Activated CD8-positive, alpha-beta memory T cell treated with anti-CD3 and anti-CD28 coated beads, Interleukin-2, amount 10 ng/mL, durations not matched to agents 7 days and 5 days (primary cell): ENCODE measurements at regions of chr10 and their contacts with region 1.

Region 1: DNA sequence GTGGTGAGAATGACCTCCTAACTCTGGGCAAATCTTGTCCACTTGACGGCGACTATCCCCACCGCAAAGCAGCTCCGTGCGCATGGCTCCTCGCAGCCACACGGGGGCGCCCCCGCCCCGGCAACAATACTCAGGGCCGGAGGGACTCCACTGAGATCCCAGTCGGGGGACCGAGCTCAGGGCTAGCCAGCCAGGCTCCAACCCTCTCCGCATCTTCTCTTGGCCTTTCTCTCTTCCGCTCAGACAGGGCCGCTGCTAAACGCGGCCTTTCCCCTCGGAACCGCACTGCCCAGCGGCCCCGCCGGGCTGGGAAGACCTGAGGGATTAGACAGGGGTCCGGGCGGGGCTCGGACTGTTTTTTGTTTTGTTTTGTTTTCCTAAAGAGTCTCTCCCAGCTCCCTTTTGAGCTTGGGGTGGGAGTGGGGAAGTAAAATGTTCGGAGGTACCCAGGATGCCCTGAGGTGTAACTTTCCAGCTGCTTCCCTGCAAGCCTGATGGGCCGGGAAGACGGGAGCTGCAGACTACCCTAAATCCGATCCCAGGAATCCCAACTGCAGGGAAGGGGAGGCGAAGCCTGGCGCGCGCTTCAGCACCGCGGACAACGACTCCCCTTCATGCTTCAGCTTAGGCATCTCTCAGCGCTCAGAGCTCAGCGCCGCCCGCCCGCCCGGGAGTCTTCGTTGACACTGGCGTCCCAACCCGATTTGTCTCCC is 2.7 kb downstream of the KCNIP2 start:
- DNase-seq: peak; percentile 86
- ATAC-seq: peak; percentile 77
- H3K4me3 Mint-ChIP-seq: peak overlapping the region; percentile 73
- H3K27ac Mint-ChIP-seq: peak overlapping the region; percentile 64
- H3K4me1 Mint-ChIP-seq: peaks cover 35% of the 10 kb centered on the region
- H3K27me3 Mint-ChIP-seq: peaks cover 12% of the 10 kb centered on the region

Region 2: DNA sequence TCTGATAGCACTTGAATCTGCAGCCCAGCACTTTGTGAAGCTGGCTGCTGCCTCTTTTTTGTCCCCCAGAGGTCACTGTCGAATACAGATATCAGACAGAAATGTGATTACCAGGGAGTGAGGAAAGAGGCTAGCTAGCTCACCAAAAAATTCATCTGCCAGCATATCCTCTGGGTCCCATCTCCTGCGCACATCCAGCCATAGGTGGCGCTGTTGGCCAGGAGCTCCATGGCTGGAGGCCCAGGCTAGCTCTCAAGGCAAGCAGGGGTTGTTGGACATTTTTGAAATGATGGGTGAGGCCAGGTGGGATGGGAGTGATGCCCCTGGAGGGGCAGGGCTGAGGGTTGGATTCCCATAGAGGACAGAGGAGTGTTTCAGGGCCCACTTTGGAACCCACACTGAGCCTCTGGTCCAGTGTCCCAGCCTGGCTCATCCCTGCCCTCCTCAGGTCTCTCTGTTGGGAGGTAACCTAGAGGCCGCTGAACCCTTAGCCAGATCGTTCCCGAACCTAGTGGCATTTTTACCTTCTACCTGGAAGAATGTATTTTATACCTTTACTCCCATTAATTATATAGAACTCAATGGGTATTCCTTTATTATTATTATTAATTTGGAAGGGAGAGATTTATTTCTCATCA is 238.0 kb before region 1 on chr10:
- CTCF ChIA-PET with region 1: interaction called, 11 read pairs
- DNase-seq: peak; percentile 83
- ATAC-seq: peak; percentile 98
- H3K4me3 Mint-ChIP-seq: no peak overlapping the region
- H3K27ac Mint-ChIP-seq: no peak overlapping the region
- H3K4me1 Mint-ChIP-seq: no peaks in the 10 kb centered on the region
- H3K27me3 Mint-ChIP-seq: no peaks in the 10 kb centered on the region

Region 3: DNA sequence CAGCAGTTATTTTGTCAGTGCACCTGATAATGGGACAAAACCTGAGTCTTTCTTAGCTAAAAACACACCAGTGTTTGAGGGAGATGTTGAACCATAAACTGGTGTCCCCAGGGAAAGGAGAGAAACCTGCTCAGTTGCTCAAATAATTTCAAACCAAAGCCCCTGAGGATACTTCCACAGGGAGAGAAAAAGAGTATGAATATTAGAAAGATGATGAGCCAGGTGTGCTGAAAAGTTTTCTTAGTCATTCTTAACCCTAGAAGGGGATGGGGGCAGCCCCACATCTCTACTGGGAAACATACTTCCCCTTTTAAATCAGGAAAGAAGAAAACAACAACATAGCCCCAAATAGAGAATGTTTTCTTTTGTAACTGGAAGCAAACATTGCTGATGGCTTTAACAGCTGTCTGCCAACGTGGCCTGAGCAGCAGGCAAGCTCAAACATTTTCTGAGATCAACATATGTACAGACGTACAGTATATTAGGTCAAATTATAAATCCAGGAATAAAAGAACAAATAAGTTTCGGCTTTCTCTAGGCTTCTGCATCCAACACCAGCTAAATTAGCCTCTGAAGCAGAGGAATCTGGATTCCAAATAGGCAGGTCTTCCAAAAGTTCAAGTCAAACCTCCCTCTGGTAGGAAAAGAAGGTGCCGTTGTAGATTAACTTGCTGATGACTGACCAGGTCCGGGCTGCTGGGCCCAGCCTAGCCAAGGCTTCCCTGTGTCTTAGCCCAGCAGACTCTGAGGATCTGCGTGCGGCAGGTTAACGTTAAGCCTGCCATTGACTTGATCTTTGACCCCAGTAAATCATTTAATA is 115.4 kb before region 1 on chr10:
- CTCF ChIA-PET with region 1: no interaction called
- DNase-seq: no peak
- ATAC-seq: no peak
- H3K4me3 Mint-ChIP-seq: no peak overlapping the region
- H3K27ac Mint-ChIP-seq: no peak overlapping the region
- H3K4me1 Mint-ChIP-seq: peaks cover 7% of the 10 kb centered on the region
- H3K27me3 Mint-ChIP-seq: peaks cover 10% of the 10 kb centered on the region

Region 4: DNA sequence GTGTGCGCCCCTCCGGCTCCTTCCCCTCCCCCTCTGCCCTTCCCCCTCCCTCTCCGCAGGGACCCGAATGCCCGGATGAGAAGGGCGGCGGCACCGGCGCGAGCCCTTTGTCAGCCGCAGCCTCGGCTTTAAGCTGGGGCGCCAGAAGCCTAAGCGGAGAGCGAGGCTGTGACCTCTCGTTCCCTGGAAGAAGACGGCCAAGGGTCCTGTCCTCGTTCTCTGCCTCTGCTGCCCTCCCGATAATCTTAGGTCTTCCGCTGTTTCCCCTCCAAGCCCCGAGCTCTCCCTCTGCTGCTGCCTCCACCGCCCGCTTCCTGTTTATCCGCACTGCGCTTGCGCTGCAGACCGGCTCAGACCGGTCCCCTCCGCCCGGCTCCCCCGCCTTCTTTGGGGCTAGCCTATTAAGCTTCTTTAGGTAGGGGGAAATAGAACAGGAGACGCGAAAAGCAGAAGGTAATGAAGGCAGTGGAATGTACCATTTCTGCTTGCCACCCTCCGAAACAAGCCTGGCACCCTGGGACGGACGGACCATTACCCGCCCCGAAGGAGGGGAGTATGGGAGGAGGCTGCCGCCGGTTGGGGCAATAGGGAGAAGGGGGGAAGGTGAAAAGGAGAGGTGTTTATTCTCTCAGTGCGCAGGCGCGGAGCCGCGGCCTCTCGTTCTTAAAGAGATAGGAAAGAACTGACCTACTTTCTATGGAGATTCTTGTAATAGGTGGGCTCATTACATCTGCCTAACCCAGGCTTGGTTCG is 22.6 kb before region 1 on chr10 and contains the start of gene OGA:
- CTCF ChIA-PET with region 1: interaction called, 21 read pairs
- DNase-seq: peak; percentile 99
- ATAC-seq: peak; percentile 92
- H3K4me3 Mint-ChIP-seq: peak within 1 kb of the TSS; percentile 90
- H3K27ac Mint-ChIP-seq: peak within 1 kb of the TSS; percentile 97
- H3K4me1 Mint-ChIP-seq: peaks cover 41% of the 10 kb centered on the region
- H3K27me3 Mint-ChIP-seq: no peaks in the 10 kb centered on the region
- total RNA-seq, gene OGA: 120 to 139 TPM

Region 5: GRCh38 chr10:101889256-101890210 is 48.6 kb after region 1 on chr10:
- CTCF ChIA-PET with region 1: interaction called, 61 read pairs
- DNase-seq: peak; percentile 85
- ATAC-seq: peak; percentile 70
- H3K4me3 Mint-ChIP-seq: no peak overlapping the region
- H3K27ac Mint-ChIP-seq: no peak overlapping the region
- H3K4me1 Mint-ChIP-seq: peaks cover 14% of the 10 kb centered on the region
- H3K27me3 Mint-ChIP-seq: no peaks in the 10 kb centered on the region

Region 6: DNA sequence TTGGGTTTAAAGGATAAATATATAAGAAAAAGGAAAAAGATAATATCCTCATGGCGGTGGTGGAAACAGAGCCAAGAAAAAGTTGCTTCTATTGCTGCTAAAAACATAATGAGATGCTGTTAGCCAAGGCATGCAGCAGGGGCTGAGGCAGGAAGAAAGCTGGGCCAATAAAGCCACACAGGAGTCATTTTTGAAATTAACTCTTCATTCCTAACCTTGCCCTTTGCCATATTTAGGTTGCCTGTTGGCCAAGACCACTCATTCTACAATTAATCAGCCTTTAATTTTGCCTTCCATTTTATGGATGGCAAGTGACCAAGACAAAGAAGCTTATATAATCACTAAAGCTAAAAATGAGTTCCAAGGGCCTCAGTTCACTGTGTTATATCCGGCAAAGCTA is 156.9 kb after region 1 on chr10:
- CTCF ChIA-PET with region 1: interaction called, 13 read pairs
- DNase-seq: no peak
- ATAC-seq: peak; percentile 49
- H3K4me3 Mint-ChIP-seq: no peak overlapping the region
- H3K27ac Mint-ChIP-seq: peak overlapping the region; percentile 0
- H3K4me1 Mint-ChIP-seq: peaks cover 30% of the 10 kb centered on the region
- H3K27me3 Mint-ChIP-seq: no peaks in the 10 kb centered on the region

Region 7: DNA sequence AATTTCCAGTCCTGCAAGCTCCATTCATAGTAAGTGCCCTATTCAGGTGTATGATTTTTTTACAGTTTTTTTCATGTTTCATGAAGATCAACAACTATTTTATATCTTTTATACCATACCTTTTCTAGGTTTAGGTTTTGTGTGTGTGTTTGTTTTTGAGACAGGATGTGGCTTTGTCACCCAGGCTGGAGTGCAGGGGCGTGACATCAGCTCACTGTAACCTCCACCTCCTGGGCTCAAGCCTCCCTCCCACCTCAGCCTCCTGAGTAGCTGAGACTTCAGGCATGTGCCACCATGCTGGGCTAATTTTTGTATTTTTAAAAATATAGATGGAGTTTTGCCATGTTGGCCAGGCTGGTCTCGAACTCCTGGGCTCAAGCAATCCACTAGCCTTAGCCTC is 180.0 kb after region 1 on chr10:
- CTCF ChIA-PET with region 1: interaction called, 16 read pairs
- DNase-seq: peak; percentile 64
- ATAC-seq: peak; percentile 51
- H3K4me3 Mint-ChIP-seq: no peak overlapping the region
- H3K27ac Mint-ChIP-seq: no peak overlapping the region
- H3K4me1 Mint-ChIP-seq: peaks cover 2% of the 10 kb centered on the region
- H3K27me3 Mint-ChIP-seq: no peaks in the 10 kb centered on the region

Region 8: GRCh38 chr10:102114861-102115618 is 274.1 kb after region 1 on chr10:
- CTCF ChIA-PET with region 1: interaction called, 10 read pairs
- DNase-seq: peak; percentile 92
- ATAC-seq: peak; percentile 75
- H3K4me3 Mint-ChIP-seq: peak overlapping the region; percentile 91
- H3K27ac Mint-ChIP-seq: peak overlapping the region; percentile 91
- H3K4me1 Mint-ChIP-seq: peaks cover 61% of the 10 kb centered on the region
- H3K27me3 Mint-ChIP-seq: no peaks in the 10 kb centered on the region